Mammary epithelial cell (primary cell): ENCODE measurements at regions of chr2 and their contacts with region 1.

Region 1: DNA sequence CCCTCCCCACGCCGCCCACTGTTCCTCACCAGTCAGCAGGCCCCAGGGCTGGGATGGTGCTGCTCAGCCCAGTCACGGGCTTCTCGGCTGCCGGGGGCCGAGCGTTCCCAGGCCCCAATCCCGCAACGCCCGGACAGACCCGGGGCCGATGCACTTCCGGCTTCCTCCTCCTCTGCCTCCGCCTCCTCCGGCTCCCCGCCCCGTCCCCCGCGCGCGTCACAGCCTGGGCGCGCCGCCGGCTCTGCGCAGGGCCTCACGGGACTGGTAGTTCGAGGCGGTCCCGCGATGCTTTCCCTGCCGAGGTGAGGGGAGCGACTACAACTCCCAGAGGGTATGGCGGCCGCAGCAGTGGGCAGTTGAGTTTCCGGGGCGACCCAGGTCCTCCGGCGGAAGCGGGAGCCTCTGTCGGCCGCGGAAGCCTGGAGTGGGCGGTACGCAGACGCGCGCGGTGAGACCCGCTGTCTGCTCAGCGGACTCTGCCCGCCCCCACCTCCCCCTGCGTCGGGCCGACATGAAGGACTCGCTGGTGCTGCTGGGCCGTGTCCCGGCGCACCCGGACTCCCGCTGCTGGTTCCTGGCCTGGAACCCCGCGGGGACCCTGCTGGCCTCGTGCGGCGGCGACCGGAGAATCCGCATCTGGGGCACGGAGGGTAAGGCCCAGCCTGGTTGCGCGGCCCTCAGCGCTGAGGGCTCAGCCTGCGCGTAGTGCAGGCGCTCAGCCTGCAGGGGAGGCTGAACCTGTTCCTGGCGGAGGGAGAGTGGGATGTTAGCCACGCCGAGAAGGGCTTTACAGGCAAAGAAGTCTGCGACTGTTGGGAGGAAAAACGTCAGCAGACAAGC is at the starts of genes CIAO1 and TMEM127:
- DNase-seq: peak; percentile 99
- H3K4me3 ChIP-seq: peak within 1 kb of the TSS; percentile 93 to 98 (median 96)
- H3K27ac ChIP-seq: peak within 1 kb of the TSS; percentile 76
- H3K4me1 ChIP-seq: peaks cover 30% of the 10 kb centered on the region
- H3K27me3 ChIP-seq: no peaks in the 10 kb centered on the region
- CTCF ChIP-seq: peak in 1 of 2 donors; percentile 28
- total RNA-seq, gene CIAO1: 64.5 to 93.9 TPM
- total RNA-seq, gene TMEM127: 39.9 to 43.8 TPM

Region 2: GRCh38 chr2:96195410-96196066 is 70.5 kb before region 1 on chr2:
- CTCF ChIA-PET with region 1: no interaction called
- dilution Hi-C with region 1: loop called (anchors 5 kb)
- in situ Hi-C with region 1: no loop called
- intact Hi-C with region 1: no loop called
- DNase-seq: no peak
- H3K4me3 ChIP-seq: no peak overlapping the region
- H3K27ac ChIP-seq: no peak overlapping the region
- H3K4me1 ChIP-seq: peaks cover 3% of the 10 kb centered on the region
- H3K27me3 ChIP-seq: no peaks in the 10 kb centered on the region
- CTCF ChIP-seq: no peak

Region 3: DNA sequence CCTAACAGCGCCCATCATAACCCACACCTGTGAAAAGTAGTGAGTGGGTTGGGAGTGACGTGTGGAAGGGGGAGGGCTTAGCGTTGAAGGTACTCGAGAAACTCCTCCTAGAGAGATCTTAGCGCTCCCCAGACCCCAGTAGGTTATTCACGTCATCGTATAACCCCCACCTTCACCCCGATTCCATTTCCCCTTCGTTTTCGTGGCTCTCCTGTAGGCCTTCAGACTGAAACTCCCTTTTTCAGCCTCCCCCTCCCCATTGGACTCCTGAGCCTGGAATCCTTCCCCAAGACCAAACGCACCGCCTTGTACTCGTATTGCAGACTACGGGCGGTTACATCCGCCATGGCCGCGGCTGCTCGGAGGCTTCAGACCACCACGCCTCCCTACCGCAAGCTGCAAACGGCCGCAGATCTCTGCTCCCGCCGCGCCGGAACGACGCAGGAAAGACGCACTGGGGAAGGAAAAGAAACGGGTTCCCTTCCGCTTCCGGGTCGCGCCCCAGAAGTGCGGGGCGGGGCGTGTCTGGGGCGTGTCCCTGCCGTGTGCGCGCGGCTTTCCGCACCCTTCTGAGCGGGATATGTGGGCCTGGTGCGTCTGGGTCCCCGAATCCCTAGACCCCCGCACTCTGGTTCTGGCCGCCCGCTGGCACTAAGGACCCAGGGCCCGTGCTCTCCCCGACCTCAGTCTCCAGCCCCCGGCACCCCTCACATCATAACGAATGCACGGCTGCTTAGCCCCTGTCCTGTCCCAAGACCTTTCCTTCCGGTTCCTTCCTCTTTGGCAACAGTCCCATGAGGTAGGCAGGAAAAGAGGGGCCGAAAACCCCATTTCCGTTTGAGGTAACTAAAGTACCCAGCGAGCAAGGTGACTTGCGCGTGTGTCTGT is 39.3 kb after region 1 on chr2 and contains the start of gene SNRNP200:
- CTCF ChIA-PET with region 1: no interaction called
- dilution Hi-C with region 1: no loop called
- in situ Hi-C with region 1: no loop called
- intact Hi-C with region 1: no loop called
- DNase-seq: peak; percentile 84
- H3K4me3 ChIP-seq: peak within 1 kb of the TSS; percentile 74 to 97 (median 84)
- H3K27ac ChIP-seq: peak within 1 kb of the TSS; percentile 79
- H3K4me1 ChIP-seq: peaks cover 15% of the 10 kb centered on the region
- H3K27me3 ChIP-seq: no peaks in the 10 kb centered on the region
- CTCF ChIP-seq: no peak
- total RNA-seq, gene SNRNP200: 45.5 to 93.8 TPM